Sigmoid colon (tissue), 7 donors: ENCODE measurements at regions of chr3 and their contacts with region 1.

Region 1: DNA sequence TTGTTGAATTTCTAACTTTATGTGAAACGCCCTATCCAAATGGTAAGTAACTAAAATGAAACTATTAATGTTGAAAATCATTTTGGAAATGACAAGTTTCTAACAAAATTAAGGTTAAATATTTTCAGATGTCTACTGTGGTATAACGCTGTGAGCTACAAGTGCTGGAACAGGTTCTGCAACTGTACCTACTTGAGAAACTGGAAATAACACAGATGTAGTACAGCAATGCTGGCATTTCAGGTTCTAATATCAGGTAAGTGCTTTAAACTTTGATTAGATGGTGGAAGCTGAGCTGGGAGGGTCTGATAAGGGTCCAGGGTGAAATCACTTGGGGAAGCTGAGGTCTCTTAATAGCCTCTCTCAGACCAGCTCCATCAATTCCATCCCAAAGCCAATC is 315.1 kb downstream of the STXBP5L start:
- DNase-seq: no peak
- H3K4me3 ChIP-seq: no peak overlapping the region
- H3K27ac ChIP-seq: no peak overlapping the region
- H3K4me1 ChIP-seq: no peaks in the 10 kb centered on the region
- H3K27me3 ChIP-seq: no peaks in the 10 kb centered on the region
- CTCF ChIP-seq: no peak
- EP300 ChIP-seq: no peak
- POLR2A ChIP-seq: no peak

Region 2: DNA sequence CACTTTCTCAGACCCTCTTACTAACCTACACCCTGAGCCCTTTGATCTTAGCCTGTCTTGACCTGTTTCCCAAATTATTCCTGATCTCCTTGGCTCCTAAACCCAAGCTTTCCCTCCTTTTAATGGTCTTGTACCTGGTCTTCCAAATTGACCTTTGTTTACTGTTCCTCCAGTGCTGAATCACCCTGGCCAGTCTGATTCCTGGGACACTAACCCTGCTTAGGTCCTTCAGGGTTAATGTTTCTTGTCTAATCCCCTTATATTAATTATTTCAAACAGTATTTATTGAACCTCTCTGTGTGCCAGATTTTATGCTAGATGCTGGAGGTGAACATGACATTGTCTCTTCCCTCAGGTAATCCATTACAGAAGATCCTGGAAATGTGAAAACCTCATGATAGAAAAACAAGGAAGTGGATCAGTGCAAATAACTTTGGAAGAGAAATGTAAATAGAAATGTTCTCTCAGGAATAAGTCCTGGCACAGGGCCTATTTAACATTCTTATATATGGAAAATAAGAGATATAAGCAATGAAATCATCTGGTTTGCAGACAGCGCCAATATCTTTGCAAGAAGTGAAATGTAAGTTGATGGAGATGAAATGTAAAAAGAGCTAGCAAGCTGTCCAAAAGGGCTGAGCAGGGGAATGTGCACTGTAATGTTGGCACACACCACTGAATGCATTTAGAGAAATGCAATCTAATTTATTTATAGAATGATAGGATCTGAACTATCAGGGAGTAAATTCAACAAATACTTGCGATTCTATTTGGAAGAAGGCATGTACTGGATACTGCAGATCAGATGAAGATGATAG is 561.8 kb before region 1 on chr3:
- intact Hi-C with region 1: loop called (anchors 5 kb)
- DNase-seq: no peak
- H3K4me3 ChIP-seq: no peak overlapping the region
- H3K27ac ChIP-seq: no peak overlapping the region
- H3K4me1 ChIP-seq: peaks cover 0 to 10% (median 0%) of the 10 kb centered on the region in 4 donors
- H3K27me3 ChIP-seq: no peaks in the 10 kb centered on the region
- CTCF ChIP-seq: no peak
- EP300 ChIP-seq: no peak
- POLR2A ChIP-seq: no peak